ENCODE measurements at regions of chr20 and their contacts with region 1.

Region 1: DNA sequence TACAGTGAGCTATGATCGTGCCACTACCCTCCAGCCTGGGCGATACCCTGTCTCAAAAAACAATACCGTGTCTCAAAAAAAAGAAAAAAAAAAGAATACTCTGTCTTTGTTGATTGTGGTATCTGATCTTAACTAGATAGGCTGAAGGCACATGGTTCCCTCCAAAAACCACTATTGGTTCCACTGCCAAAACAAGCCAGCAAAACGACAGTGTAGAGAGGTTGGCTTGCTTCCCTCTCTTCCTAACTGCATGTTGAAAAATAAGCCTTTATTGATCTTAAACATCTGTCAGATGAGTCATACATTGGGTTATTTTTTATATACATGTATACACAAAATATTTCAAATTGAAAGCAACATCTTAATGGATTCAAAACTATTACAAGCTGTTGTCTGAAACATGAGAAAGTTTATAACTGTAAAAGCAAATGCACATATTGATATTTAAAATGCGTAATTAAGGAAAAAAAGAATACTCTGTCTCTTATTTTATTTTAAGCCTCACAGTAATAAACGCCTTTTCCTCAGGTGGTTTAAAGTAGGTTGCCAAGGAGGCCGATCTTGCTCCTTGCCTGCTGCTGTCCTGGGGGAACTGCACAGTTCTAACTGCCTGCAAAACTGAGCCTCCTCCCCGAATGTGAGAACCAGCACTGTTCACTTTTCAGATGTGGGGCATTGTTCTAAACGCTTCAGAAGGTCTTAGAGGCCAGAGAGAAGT is 7.0 kb upstream of the NINL start:
- DNase-seq: no peak
- H3K4me3 ChIP-seq: no peak overlapping the region
- H3K27ac ChIP-seq: no peak overlapping the region
- H3K4me1 ChIP-seq: no peaks in the 10 kb centered on the region
- H3K27me3 ChIP-seq: peaks cover 0 to 5% of the 10 kb centered on the region in 2 experiments
- CTCF ChIP-seq: no peak
- POLR2A ChIP-seq: no peak

Region 2: GRCh38 chr20:25608774-25609173 is 16.5 kb after region 1 on chr20:
- CTCF ChIA-PET with region 1: interaction called, 3 read pairs
- POLR2A ChIA-PET with region 1: no interaction called
- dilution Hi-C with region 1: no loop called
- intact Hi-C with region 1: loop called (anchors 2 kb)
- DNase-seq: no peak
- H3K4me3 ChIP-seq: no peak overlapping the region
- H3K27ac ChIP-seq: no peak overlapping the region
- H3K4me1 ChIP-seq: no peaks in the 10 kb centered on the region
- H3K27me3 ChIP-seq: no peaks in the 10 kb centered on the region
- CTCF ChIP-seq: no peak
- POLR2A ChIP-seq: no peak

Measured in endothelial cell of umbilical vein (primary cell).